ENCODE measurements at regions of chr2 and their contacts with region 1.

Region 1: DNA sequence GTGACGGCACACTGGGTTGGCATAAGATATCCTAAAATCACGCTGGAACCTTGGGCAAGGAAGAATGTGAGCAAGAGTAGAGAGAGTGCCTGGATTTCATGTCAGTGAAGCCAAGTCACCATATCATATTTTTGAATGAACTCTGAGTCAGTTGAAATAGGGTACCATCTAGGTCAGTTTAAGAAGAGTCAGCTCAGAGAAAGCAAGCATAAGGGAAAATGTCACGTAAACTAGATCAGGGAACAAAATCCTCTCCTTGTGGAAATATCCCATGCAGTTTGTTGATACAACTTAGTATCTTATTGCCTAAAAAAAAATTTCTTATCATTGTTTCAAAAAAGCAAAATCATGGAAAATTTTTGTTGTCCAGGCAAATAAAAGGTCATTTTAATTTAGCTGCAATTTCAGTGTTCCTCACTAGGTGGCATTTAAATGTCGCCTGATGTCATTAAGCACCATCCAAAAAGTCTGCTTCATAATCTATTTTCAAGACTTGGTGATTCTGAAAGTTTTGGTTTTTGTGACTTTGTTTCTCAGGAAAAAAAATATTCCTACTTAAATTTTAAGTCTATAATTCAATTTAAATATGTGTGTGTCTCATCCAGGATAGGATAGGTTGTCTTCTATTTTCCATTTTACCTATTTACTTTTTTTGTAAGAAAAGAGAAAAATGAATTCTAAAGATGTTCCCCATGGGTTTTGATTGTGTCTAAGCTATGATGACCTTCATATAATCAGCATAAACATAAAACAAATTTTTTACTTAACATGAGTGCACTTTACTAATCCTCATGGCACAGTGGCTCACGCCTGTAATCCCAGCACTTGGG is 19.6 kb downstream of the RSAD2 start:
- DNase-seq: peak in 1 of 2 experiments; percentile 39
- H3K4me3 ChIP-seq: no peak overlapping the region
- H3K27ac ChIP-seq: no peak overlapping the region
- H3K4me1 ChIP-seq: no peaks in the 10 kb centered on the region
- H3K27me3 ChIP-seq: peaks cover 14% of the 10 kb centered on the region; the same call in 1 of the 2 replicates
- CTCF ChIP-seq: peak; percentile 77

Region 2: GRCh38 chr2:6741239-6741638 is 155.9 kb before region 1 on chr2:
- CTCF ChIA-PET with region 1: no interaction called
- POLR2A ChIA-PET with region 1: no interaction called
- intact Hi-C with region 1: no loop called
- DNase-seq: no peak
- H3K4me3 ChIP-seq: no peak overlapping the region
- H3K27ac ChIP-seq: no peak overlapping the region
- H3K4me1 ChIP-seq: no peaks in the 10 kb centered on the region
- H3K27me3 ChIP-seq: peaks cover 5% of the 10 kb centered on the region; the same call in 1 of the 2 replicates
- CTCF ChIP-seq: no peak

Region 3: GRCh38 chr2:6877402-6878304 is 19.5 kb before region 1 on chr2 and contains the start of gene RSAD2:
- CTCF ChIA-PET with region 1: no interaction called
- POLR2A ChIA-PET with region 1: no interaction called
- intact Hi-C with region 1: no loop called
- DNase-seq: no peak
- H3K4me3 ChIP-seq: peak within 1 kb of the TSS; percentile 34; the same call in 1 of the 2 replicates
- H3K27ac ChIP-seq: no peak within 1 kb of the TSS
- H3K4me1 ChIP-seq: no peaks in the 10 kb centered on the region
- H3K27me3 ChIP-seq: peaks cover 14% of the 10 kb centered on the region; the same call in 1 of the 2 replicates
- CTCF ChIP-seq: no peak
- total RNA-seq, gene RSAD2: not detected in 2 replicates

Region 4: GRCh38 chr2:7044261-7045250 is 147.4 kb after region 1 on chr2:
- CTCF ChIA-PET with region 1: interaction called, 3 read pairs
- POLR2A ChIA-PET with region 1: no interaction called
- intact Hi-C with region 1: loop called (anchors 1 kb)
- DNase-seq: peak in 1 of 2 experiments; percentile 19
- H3K4me3 ChIP-seq: no peak overlapping the region
- H3K27ac ChIP-seq: no peak overlapping the region
- H3K4me1 ChIP-seq: no peaks in the 10 kb centered on the region
- H3K27me3 ChIP-seq: 0 out of 2 replicates have a peak, but pooled peaks cover 4% of the 10 kb centered on the region
- CTCF ChIP-seq: peak; percentile 96

Region 5: GRCh38 chr2:7083577-7084509 is 186.7 kb after region 1 on chr2:
- CTCF ChIA-PET with region 1: no interaction called
- POLR2A ChIA-PET with region 1: no interaction called
- intact Hi-C with region 1: loop called (anchors 5 kb)
- DNase-seq: no peak
- H3K4me3 ChIP-seq: no peak overlapping the region
- H3K27ac ChIP-seq: no peak overlapping the region
- H3K4me1 ChIP-seq: no peaks in the 10 kb centered on the region
- H3K27me3 ChIP-seq: peaks cover 24% of the 10 kb centered on the region
- CTCF ChIP-seq: peak; percentile 76